Naive thymus-derived CD4-positive, alpha-beta T cell (primary cell): ENCODE measurements at regions of chr2 and their contacts with region 1.

Region 1: DNA sequence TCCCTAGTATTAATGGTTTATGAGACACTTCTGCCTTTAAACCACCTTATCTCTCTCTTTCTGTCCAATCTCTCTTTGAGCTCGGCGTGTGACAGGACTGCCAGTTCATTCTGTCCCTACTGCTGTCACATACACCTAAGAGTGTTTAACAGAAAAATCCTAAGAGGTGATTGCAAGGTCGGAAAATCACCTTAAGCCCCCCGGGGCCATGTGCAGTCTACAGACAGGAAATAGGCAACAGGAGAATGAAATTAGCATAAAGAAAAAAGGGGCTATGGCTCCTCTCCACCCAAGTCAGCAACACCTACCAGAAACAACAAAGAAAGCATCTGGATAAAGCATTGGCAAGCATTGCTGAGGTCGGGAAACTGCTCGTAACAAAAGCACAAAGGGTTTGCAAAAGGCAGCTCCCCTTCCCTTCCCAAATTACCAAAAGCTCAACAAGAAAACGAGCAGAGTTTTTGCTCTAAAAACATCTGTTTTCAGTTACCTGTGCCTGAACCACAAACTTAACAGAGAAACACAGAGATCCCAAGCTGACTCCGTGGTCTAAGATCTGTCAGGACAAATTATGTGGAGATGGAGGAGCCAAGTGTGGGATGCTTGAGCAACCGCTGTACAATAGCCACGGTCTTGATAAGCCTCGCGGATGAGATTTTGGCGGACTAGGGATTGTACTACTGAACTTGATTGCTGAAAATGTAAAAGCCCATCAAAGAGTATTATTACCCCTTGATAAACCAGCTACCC is 30.4 kb downstream of the ANKRD44 start:
- DNase-seq: no peak
- ATAC-seq: peak; percentile 30
- H3K4me3 ChIP-seq: peak overlapping the region; percentile 6
- H3K4me3 Mint-ChIP-seq: peak overlapping the region; percentile 63 to 81 (median 72)
- H3K27ac ChIP-seq: peak overlapping the region; percentile 68
- H3K27ac Mint-ChIP-seq: peak overlapping the region; percentile 30 to 99 (median 91)
- H3K4me1 ChIP-seq: peaks cover 65 to 80% of the 10 kb centered on the region in 2 donors
- H3K4me1 Mint-ChIP-seq: peaks cover 69 to 95% (median 83%) of the 10 kb centered on the region in 7 donors
- H3K27me3 ChIP-seq: no peaks in the 10 kb centered on the region
- H3K27me3 Mint-ChIP-seq: no peaks in the 10 kb centered on the region

Region 2: GRCh38 chr2:197255543-197255942 is 24.6 kb before region 1 on chr2:
- CTCF ChIA-PET with region 1: no interaction called
- POLR2A ChIA-PET with region 1: interaction called, 3 read pairs
- intact Hi-C with region 1: loop called in 1 of 2 experiments (anchors 1 kb)
- DNase-seq: peak in 7 of 9 donors; percentile 47 to 83 (median 56)
- ATAC-seq: peak; percentile 96
- H3K4me3 ChIP-seq: peak overlapping the region; percentile 38
- H3K4me3 Mint-ChIP-seq: peak overlapping the region; percentile 69 to 88 (median 77)
- H3K27ac ChIP-seq: peak overlapping the region; percentile 80
- H3K27ac Mint-ChIP-seq: peak overlapping the region; percentile 84 to 98 (median 94)
- H3K4me1 ChIP-seq: peaks cover 68 to 74% of the 10 kb centered on the region in 2 donors
- H3K4me1 Mint-ChIP-seq: peaks cover 58 to 98% (median 82%) of the 10 kb centered on the region in 7 donors
- H3K27me3 ChIP-seq: no peaks in the 10 kb centered on the region
- H3K27me3 Mint-ChIP-seq: no peaks in the 10 kb centered on the region

Region 3: GRCh38 chr2:197268786-197269584 is 11.2 kb before region 1 on chr2:
- CTCF ChIA-PET with region 1: interaction called, 4 read pairs
- POLR2A ChIA-PET with region 1: interaction called, 12 read pairs
- intact Hi-C with region 1: loop called in 1 of 2 experiments (anchors 1 kb)
- DNase-seq: peak in 2 of 9 donors; percentile 42 to 61
- ATAC-seq: peak; percentile 73
- H3K4me3 ChIP-seq: no peak overlapping the region
- H3K4me3 Mint-ChIP-seq: peak overlapping the region; percentile 1 to 85 (median 58)
- H3K27ac ChIP-seq: peak overlapping the region; percentile 63
- H3K27ac Mint-ChIP-seq: peak overlapping the region; percentile 76 to 96 (median 85)
- H3K4me1 ChIP-seq: peaks cover 76 to 82% of the 10 kb centered on the region in 2 donors
- H3K4me1 Mint-ChIP-seq: peaks cover 60 to 100% (median 92%) of the 10 kb centered on the region in 7 donors
- H3K27me3 ChIP-seq: no peaks in the 10 kb centered on the region
- H3K27me3 Mint-ChIP-seq: no peaks in the 10 kb centered on the region

Region 4: DNA sequence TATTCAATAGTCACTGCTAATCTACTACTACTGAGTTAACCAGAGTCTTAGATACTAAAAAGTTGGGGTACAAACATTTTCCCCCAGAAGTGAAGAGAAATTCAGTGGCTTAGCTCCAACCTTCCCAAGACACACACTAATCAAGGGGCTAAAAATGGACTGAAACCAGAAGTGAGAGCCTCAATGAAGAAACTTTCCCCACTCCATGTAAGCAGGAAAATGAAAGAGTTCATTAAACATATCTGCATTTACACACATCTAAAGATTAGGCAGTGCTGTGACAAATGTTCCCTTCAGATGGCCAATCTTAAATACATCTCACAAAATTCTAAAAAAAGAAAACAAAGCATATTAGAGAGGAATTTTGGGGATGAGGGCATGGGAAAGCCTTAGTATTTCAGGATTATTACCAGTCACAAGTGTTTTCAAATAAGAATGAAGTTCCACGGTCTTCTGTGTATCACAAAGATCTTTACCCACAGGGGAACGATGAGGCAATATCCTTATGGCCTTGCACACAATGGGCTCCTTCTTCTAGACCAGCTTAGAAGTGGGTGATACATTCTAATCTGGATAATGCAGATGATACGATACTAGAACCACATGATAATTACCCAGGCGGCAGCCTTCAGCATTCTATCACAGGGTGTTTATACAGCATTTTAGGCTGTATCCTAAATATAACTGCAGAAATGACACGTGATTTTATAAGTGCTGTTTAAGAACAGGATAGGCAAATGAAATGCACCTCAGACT is 13.3 kb after region 1 on chr2:
- CTCF ChIA-PET with region 1: interaction called, 3 read pairs
- POLR2A ChIA-PET with region 1: interaction called, 9 read pairs
- intact Hi-C with region 1: loop called in 1 of 2 experiments (anchors 1 kb)
- DNase-seq: peak in 1 of 9 donors; percentile 49
- ATAC-seq: peak; percentile 80
- H3K4me3 ChIP-seq: peak overlapping the region; percentile 23
- H3K4me3 Mint-ChIP-seq: peak overlapping the region; percentile 74 to 97 (median 84)
- H3K27ac ChIP-seq: peak overlapping the region; percentile 69
- H3K27ac Mint-ChIP-seq: peak overlapping the region; percentile 87 to 99 (median 95)
- H3K4me1 ChIP-seq: peaks cover 87 to 93% of the 10 kb centered on the region in 2 donors
- H3K4me1 Mint-ChIP-seq: peaks cover 71 to 96% (median 91%) of the 10 kb centered on the region in 7 donors
- H3K27me3 ChIP-seq: no peaks in the 10 kb centered on the region
- H3K27me3 Mint-ChIP-seq: no peaks in the 10 kb centered on the region

Region 5: DNA sequence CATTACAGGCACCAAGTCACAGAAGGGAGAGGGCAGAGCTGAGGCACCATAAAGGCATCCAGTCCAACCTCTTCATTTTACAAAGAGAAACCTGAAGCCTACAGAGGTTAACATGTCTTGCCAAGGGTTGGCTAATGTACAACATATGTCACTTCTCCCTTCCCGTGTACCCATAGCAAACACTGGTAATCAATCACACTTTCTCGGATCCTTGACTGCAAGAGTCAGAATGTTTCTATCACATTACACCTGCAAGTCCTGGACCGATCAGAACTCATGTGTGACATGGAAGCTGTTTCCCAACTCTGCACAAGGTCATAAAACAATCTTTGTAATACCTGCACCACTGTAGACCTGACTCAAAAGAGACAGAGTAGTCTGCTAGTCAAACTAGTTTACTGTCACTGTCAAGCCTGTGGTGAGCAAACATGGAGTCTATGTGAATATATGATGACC is 24.4 kb after region 1 on chr2:
- CTCF ChIA-PET with region 1: no interaction called
- POLR2A ChIA-PET with region 1: interaction called, 10 read pairs
- intact Hi-C with region 1: no loop called
- DNase-seq: no peak
- ATAC-seq: peak; percentile 33
- H3K4me3 ChIP-seq: peak overlapping the region; percentile 20
- H3K4me3 Mint-ChIP-seq: peak overlapping the region; percentile 63 to 98 (median 92)
- H3K27ac ChIP-seq: peak overlapping the region; percentile 85
- H3K27ac Mint-ChIP-seq: peak overlapping the region; percentile 90 to 99 (median 95)
- H3K4me1 ChIP-seq: peaks cover 81 to 82% of the 10 kb centered on the region in 2 donors
- H3K4me1 Mint-ChIP-seq: peaks cover 48 to 90% (median 82%) of the 10 kb centered on the region in 7 donors
- H3K27me3 ChIP-seq: no peaks in the 10 kb centered on the region
- H3K27me3 Mint-ChIP-seq: no peaks in the 10 kb centered on the region